Left ventricle myocardium inferior (tissue), 1 donor: ENCODE measurements at regions of chr1 and their contacts with region 1.

Region 1: GRCh38 chr1:149942207-149942606 is 5.5 kb upstream of the MTMR11 start:
- DNase-seq: no peak
- H3K4me3 ChIP-seq: no peak overlapping the region
- H3K27ac ChIP-seq: peak overlapping the region; percentile 55
- H3K4me1 ChIP-seq: peaks cover 38% of the 10 kb centered on the region
- H3K27me3 ChIP-seq: no peaks in the 10 kb centered on the region
- CTCF ChIP-seq: peak; percentile 46

Region 2: GRCh38 chr1:149886396-149887195 is 55.6 kb before region 1 on chr1:
- intact Hi-C with region 1: loop called (anchors 5 kb)
- DNase-seq: peak; percentile 75
- H3K4me3 ChIP-seq: peak overlapping the region; percentile 77
- H3K27ac ChIP-seq: peak overlapping the region; percentile 98
- H3K4me1 ChIP-seq: peaks cover 51% of the 10 kb centered on the region
- H3K27me3 ChIP-seq: no peaks in the 10 kb centered on the region
- CTCF ChIP-seq: no peak

Region 3: GRCh38 chr1:150051089-150051373 is 108.8 kb after region 1 on chr1:
- intact Hi-C with region 1: no loop called
- DNase-seq: no peak
- H3K4me3 ChIP-seq: no peak overlapping the region
- H3K27ac ChIP-seq: no peak overlapping the region
- H3K4me1 ChIP-seq: peaks cover 4% of the 10 kb centered on the region
- H3K27me3 ChIP-seq: no peaks in the 10 kb centered on the region
- CTCF ChIP-seq: no peak